HEK293T (cell line): ENCODE measurements at regions of chr19 and their contacts with region 1.

Region 1: GRCh38 chr19:44570984-44571684 is 41.7 kb upstream of the CEACAM20 start:
- DNase-seq: peak; percentile 71

Region 2: DNA sequence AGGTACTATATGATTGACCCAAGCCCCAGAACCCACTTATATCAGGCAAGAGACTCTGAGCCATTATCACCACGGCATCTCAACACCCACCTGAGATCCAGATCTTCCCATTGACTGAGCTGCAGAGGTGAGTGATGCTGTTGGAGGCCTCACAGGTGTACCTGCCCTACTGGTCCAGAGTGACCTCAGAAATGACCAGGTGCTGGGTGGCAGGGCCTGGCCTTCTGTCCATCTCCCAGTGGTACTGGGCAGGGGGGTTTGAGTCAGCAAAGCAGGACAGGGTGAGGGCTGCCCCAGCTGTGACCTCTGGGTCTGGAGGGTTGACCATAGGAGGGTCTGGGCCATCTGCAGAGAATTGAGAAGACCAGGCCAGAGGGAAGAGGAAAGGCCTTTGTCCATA is 28.5 kb before region 1 on chr19:
- CTCF ChIA-PET with region 1: no interaction called
- POLR2A ChIA-PET with region 1: no interaction called
- DNase-seq: no peak

Region 3: GRCh38 chr19:44582581-44583265 is 11.6 kb after region 1 on chr19:
- CTCF ChIA-PET with region 1: interaction called, 18 read pairs
- POLR2A ChIA-PET with region 1: no interaction called
- DNase-seq: peak; percentile 75

Region 4: GRCh38 chr19:44587963-44588770 is 17.0 kb after region 1 on chr19:
- CTCF ChIA-PET with region 1: interaction called, 18 read pairs
- POLR2A ChIA-PET with region 1: no interaction called
- DNase-seq: no peak

Region 5: DNA sequence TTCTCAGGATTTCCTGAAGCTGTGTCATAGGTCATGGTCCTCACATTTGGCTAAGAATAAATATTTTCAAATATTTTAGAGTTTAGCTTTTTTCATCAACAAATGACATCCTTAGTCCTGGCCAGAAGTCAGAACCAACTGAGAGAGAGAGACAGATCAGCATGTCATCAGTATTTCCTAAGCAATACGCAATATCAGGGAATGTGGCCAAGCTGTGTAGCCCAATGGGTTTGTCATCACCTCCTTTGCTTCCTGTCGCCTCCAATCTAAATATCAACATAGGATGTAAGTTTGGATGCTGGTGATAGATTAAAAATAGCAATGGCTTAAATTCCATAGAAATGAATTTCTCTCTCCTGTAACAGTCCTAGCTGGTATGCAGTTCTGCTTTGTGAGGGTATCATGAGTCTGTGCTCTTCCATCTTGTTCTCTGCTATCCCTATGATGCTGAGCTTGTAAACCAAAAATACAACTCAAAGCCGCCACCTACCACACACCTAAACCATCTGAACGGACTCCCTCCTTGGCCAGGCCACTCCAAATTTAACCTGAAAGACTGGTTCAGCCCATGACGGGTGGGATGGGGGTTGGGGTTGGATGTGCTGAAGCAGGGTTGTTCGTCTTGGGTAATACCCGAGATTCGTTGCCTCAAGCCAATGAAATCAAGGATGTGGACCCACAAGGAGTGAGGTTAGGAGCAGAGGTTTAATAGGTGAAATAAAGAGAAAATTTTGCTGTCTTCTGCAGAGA is 32.2 kb after region 1 on chr19:
- CTCF ChIA-PET with region 1: no interaction called
- POLR2A ChIA-PET with region 1: no interaction called
- DNase-seq: no peak

Region 6: GRCh38 chr19:44626048-44626624 is 55.0 kb after region 1 on chr19:
- CTCF ChIA-PET with region 1: no interaction called
- POLR2A ChIA-PET with region 1: no interaction called
- DNase-seq: no peak

Region 7: GRCh38 chr19:44653977-44654774 is 83.0 kb after region 1 on chr19:
- CTCF ChIA-PET with region 1: interaction called, 12 read pairs
- POLR2A ChIA-PET with region 1: interaction called, 5 read pairs
- DNase-seq: peak; percentile 34